Activated CD4-positive, alpha-beta T cell treated with anti-CD3 and anti-CD28 coated beads for 36 hours (primary cell): ENCODE measurements at regions of chr19 and their contacts with region 1.

Region 1: GRCh38 chr19:40425450-40426287 is at the start of gene SERTAD1:
- DNase-seq: peak; percentile 100
- ATAC-seq: peak; percentile 91
- H3K4me3 Mint-ChIP-seq: peak within 1 kb of the TSS; percentile 89
- H3K27ac Mint-ChIP-seq: peak within 1 kb of the TSS; percentile 96
- H3K4me1 Mint-ChIP-seq: peaks cover 20% of the 10 kb centered on the region
- H3K27me3 Mint-ChIP-seq: no peaks in the 10 kb centered on the region
- total RNA-seq, gene SERTAD1: 10.0 to 14.7 TPM

Region 2: GRCh38 chr19:40331069-40331468 is 94.6 kb before region 1 on chr19:
- CTCF ChIA-PET with region 1: no interaction called
- POLR2A ChIA-PET with region 1: no interaction called
- intact Hi-C with region 1: no loop called
- DNase-seq: no peak
- ATAC-seq: no peak
- H3K4me3 Mint-ChIP-seq: no peak overlapping the region
- H3K27ac Mint-ChIP-seq: no peak overlapping the region
- H3K4me1 Mint-ChIP-seq: no peaks in the 10 kb centered on the region
- H3K27me3 Mint-ChIP-seq: no peaks in the 10 kb centered on the region

Region 3: GRCh38 chr19:40341601-40342482 is 83.8 kb before region 1 on chr19:
- CTCF ChIA-PET with region 1: no interaction called
- POLR2A ChIA-PET with region 1: no interaction called
- intact Hi-C with region 1: no loop called
- DNase-seq: no peak
- ATAC-seq: no peak
- H3K4me3 Mint-ChIP-seq: no peak overlapping the region
- H3K27ac Mint-ChIP-seq: no peak overlapping the region
- H3K4me1 Mint-ChIP-seq: peaks cover 3% of the 10 kb centered on the region
- H3K27me3 Mint-ChIP-seq: no peaks in the 10 kb centered on the region

Region 4: DNA sequence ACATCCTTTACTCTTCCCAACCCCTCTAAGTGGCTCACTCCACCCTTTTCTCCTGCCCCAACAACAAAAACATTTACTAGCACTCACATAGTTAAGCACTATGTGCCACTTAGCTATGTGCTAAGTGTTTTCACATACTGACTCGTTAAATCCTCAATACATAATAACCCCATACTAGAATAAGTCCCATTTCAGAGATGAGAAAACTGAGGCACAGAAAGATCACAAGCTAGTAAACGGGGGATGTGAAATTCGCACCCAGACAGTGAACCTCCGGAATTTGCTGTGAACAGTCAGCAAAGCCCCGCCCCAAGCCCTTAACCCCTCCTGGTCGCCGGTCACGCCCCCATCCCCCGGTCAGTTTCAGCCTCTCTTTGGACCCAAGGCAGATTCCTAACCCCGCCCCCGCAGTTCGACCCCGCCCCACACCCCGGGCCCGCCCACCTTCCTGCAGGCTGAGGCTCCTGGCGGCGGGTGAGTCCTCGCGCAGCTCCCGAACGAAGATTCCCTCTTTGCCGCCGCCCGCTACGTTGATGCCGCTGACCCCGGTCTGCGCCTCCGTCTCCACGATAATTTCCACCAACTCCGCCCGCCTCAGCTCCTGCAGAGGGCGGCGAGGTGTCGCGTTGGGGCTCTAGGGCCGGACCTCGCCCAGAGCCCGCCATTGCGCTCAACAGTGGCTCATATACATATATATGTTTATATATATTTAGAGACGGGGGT is 22.2 kb before region 1 on chr19:
- CTCF ChIA-PET with region 1: interaction called, 9 read pairs
- POLR2A ChIA-PET with region 1: interaction called, 7 read pairs
- intact Hi-C with region 1: loop called (anchors 1 to 2 kb)
- DNase-seq: peak; percentile 94
- ATAC-seq: peak; percentile 67
- H3K4me3 Mint-ChIP-seq: peak overlapping the region; percentile 77
- H3K27ac Mint-ChIP-seq: peak overlapping the region; percentile 0
- H3K4me1 Mint-ChIP-seq: peaks cover 19% of the 10 kb centered on the region
- H3K27me3 Mint-ChIP-seq: no peaks in the 10 kb centered on the region

Region 5: GRCh38 chr19:40521276-40521675 is 95.6 kb after region 1 on chr19:
- CTCF ChIA-PET with region 1: interaction called, 3 read pairs
- POLR2A ChIA-PET with region 1: no interaction called
- intact Hi-C with region 1: loop called in 1 of 2 experiments (anchors 2 kb)
- DNase-seq: peak; percentile 40
- ATAC-seq: no peak
- H3K4me3 Mint-ChIP-seq: no peak overlapping the region
- H3K27ac Mint-ChIP-seq: no peak overlapping the region
- H3K4me1 Mint-ChIP-seq: peaks cover 4% of the 10 kb centered on the region
- H3K27me3 Mint-ChIP-seq: peaks cover 20% of the 10 kb centered on the region

Region 6: GRCh38 chr19:40570313-40571004 is 144.8 kb after region 1 on chr19:
- CTCF ChIA-PET with region 1: interaction called, 3 read pairs
- POLR2A ChIA-PET with region 1: no interaction called
- intact Hi-C with region 1: loop called in 1 of 2 experiments (anchors 1 kb)
- DNase-seq: peak; percentile 97
- ATAC-seq: peak; percentile 94
- H3K4me3 Mint-ChIP-seq: peak overlapping the region; percentile 50
- H3K27ac Mint-ChIP-seq: peak overlapping the region; percentile 7
- H3K4me1 Mint-ChIP-seq: peaks cover 12% of the 10 kb centered on the region
- H3K27me3 Mint-ChIP-seq: peaks cover 19% of the 10 kb centered on the region

Region 7: DNA sequence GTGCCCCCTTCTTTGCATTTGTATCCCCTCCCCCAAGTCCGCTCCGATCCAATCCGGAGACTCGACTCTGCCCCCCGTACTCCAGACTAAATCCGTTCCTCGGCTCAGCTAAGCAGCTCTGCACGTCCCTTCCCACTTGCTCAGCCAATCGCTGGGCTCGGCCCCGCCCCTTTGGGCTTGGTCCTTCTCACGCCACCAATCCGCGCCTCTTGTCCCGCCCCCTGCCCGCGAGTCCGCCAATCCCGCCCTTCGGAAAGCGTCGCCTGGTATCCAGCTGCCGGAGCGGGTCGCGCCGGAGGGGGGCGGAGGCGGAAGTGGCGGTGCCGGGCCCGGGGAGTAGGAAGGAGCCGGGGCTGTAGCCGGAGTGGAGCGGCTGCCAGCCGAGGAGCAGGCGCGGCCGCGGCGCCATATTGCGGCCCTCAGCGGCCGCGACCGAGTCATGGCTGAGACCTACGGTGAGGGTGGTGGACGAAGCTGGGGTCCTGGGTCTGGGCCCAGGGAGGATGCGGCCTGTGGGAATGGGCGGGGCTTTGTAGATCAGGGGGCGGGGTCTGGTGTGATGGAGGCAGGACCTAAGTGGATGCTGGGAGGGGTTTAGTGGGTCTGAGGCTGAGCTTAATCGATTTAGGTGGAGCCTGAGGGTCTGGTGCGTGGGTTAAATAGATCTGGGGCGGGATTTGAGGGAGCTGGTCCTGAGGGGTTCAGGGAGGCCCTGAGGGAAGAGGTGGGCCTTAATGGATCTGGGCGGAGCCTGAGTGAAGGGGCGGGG is 352.5 kb after region 1 on chr19 and contains the start of gene RAB4B:
- CTCF ChIA-PET with region 1: no interaction called
- POLR2A ChIA-PET with region 1: no interaction called
- intact Hi-C with region 1: loop called in 1 of 2 experiments (anchors 1 kb)
- DNase-seq: peak; percentile 100
- ATAC-seq: peak; percentile 79
- H3K4me3 Mint-ChIP-seq: peak within 1 kb of the TSS; percentile 84
- H3K27ac Mint-ChIP-seq: peak within 1 kb of the TSS; percentile 94
- H3K4me1 Mint-ChIP-seq: peaks cover 38% of the 10 kb centered on the region
- H3K27me3 Mint-ChIP-seq: no peaks in the 10 kb centered on the region
- total RNA-seq, gene RAB4B: 26.4 to 33.7 TPM